ENCODE measurements at regions of chr16 and their contacts with region 1.

Region 1: DNA sequence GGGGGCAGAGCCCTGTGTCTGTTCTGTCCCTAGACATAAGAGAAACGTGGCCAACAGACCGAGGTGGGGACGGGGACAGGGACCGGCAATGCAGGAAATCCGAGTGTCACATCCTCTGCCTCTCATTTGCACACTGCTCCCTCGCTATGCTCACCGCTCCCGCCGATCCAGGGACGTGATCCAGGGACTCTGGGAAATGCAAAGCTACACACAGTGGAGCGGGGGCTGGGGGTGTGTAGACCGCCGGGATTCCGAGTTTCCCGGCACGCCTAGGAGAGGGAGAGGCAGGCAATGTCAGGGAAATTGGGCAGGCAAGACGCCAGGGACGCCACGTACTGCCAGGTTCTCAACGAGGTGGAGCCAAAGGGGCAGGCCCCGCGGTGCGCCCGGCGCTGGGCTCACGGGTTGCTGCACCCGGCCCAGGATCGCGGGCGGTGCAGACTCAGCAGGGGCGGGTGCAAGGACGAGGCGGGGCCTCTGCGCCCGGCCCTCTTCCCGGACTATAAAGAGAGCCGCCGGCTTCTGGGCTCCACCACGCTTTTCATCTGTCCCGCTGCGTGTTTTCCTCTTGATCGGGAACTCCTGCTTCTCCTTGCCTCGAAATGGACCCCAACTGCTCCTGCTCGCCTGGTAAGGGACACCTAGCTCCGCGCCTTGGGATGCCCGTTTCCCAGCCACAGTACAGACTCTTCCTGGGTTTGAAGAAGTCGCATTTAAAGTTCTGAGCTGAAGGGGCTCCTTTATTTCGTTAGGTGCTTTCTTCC is at the start of gene MT1X:
- H3K4me3 ChIP-seq: peak within 1 kb of the TSS; percentile 22
- H3K27ac ChIP-seq: peak within 1 kb of the TSS; percentile 29; the same call in 1 of the 2 replicates
- H3K4me1 ChIP-seq: peaks cover 3% of the 10 kb centered on the region
- CTCF ChIP-seq: no peak

Region 2: DNA sequence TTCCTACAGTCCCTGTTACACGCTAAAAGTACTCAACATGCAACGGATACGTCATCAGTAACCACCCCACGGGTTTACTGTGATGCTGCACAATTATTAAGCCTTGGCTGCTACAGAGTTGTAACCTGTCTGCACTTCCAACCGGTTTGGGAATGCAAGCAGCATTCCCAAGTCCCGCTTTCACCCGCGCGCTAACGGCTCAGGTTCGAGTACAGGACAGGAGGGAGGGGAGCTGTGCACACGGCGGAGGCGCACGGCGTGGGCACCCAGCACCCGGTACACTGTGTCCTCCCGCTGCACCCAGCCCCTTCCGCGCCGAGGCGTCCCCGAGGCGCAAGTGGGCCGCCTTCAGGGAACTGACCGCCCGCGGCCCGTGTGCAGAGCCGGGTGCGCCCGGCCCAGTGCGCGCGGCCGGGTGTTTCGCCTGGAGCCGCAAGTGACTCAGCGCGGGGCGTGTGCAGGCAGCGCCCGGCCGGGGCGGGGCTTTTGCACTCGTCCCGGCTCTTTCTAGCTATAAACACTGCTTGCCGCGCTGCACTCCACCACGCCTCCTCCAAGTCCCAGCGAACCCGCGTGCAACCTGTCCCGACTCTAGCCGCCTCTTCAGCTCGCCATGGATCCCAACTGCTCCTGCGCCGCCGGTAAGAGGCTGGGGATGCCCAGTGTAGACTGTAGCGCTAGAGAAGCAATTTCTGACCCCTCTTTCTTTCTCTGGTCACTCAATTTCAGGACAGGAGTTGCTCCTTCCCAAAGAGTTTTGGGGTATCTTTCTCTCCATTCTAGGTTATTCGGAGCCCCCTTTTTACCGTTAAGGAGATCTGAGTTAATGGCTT is 73.9 kb before region 1 on chr16 and contains the start of gene MT2A:
- CTCF ChIA-PET with region 1: interaction called, 3 read pairs
- POLR2A ChIA-PET with region 1: interaction called, 13 read pairs
- H3K4me3 ChIP-seq: peak within 1 kb of the TSS; percentile 51
- H3K27ac ChIP-seq: peak within 1 kb of the TSS; percentile 20; the same call in 1 of the 2 replicates
- H3K4me1 ChIP-seq: peaks cover 3% of the 10 kb centered on the region; the same call in 1 of the 2 replicates
- CTCF ChIP-seq: no peak; the same call in 1 of the 2 replicates

Region 3: DNA sequence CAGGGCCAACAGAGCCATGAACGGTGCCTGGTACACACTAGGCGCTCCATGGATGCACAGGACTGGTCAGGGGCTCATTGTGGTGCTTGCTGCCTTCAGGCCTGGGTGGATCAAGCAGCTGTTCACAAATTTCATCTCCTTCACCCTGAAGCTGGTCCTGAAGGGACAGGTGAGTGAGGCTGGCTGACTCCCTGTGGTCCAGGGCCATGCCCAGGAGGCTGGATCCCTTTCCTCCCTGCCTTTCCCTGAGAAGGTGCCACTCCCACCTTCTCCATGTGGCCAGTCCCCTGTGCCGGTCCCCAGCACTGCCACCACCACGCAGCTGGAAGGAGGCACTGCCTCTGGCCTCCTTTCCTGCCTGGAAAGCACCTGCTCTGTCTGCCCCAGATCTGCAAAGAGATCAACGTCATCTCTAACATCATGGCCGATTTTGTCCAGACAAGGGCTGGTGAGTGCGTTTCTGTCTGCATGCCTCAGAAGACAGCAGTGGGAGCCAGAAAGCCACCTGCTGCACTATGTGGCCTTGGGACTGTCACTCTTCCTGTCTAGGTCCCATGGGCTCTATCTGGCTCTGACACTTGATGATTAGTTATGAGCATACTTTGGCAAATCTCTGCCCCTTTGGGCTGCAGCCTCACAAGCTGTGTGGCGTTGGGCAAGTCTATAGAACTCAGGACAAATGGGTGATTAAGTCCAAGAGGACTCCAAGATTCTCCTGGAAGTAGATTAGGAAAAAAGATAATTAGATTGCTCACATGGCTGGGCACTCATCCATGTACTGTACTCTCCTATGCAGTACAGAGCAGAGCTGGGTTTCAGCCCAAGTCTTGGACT is 289.0 kb after region 1 on chr16:
- CTCF ChIA-PET with region 1: no interaction called
- POLR2A ChIA-PET with region 1: no interaction called
- H3K4me3 ChIP-seq: no peak overlapping the region
- H3K27ac ChIP-seq: no peak overlapping the region
- H3K4me1 ChIP-seq: no peaks in the 10 kb centered on the region
- CTCF ChIP-seq: no peak